ENCODE measurements at regions of chr7 and their contacts with region 1.

Region 1: GRCh38 chr7:48088559-48089045 is 463 bp upstream of the UPP1 start:
- DNase-seq: peak; percentile 70 to 83
- ATAC-seq: peak; percentile 81 to 86
- H3K4me3 ChIP-seq: peak overlapping the region; percentile 65 to 98 (median 86)
- H3K27ac ChIP-seq: peak overlapping the region; percentile 93 to 99 (median 96)
- H3K4me1 ChIP-seq: peaks cover 6 to 15% of the 10 kb centered on the region in 2 donors
- H3K27me3 ChIP-seq: no peaks in the 10 kb centered on the region
- CTCF ChIP-seq: no peak
- POLR2A ChIP-seq: peak in 1 of 2 donors; percentile 21

Region 2: DNA sequence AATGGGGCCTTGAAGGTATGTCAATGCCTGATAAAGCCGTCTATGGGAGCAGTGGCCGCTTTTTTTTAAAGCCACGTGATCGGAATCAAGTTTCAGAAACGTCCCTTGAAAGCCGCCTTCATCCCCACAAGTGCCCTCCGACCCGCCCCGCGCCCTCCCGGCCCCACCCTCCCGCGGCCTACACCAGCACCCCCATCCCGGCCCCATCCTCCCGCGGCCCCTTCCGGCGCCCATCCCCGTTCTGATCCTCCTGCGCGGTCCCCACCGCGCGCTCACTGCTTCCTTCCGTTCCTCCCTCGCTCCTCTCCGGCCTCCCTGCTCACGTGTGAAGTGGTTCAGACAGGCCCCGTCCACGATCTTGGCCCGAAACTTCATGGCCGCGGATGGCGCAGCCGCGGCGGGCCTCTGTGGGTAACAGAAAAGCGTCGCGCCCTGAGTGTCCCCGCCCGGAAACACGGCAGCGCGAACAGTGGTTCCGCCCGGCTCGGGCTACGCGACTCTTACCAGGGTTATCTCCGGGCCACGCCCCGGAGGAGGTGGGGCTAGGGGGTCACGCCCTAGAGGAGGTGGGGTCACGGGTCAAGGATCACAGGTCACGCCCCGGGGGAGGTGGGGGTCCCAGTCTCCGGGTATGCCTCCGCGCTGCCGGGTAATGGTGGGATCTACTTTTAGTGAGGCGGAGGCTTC is 109.3 kb before region 1 on chr7 and contains the start of gene HUS1:
- in situ Hi-C with region 1: loop called in 2 of 4 experiments (anchors 10 kb)
- intact Hi-C with region 1: loop called (anchors 1 kb)
- DNase-seq: peak; percentile 79 to 88
- ATAC-seq: peak; percentile 90 to 96
- H3K4me3 ChIP-seq: peak within 1 kb of the TSS; percentile 68 to 90 (median 74)
- H3K27ac ChIP-seq: peak within 1 kb of the TSS; percentile 78 to 82 (median 82)
- H3K4me1 ChIP-seq: peaks cover 8 to 9% of the 10 kb centered on the region in 2 donors
- H3K27me3 ChIP-seq: no peaks in the 10 kb centered on the region
- CTCF ChIP-seq: no peak
- POLR2A ChIP-seq: peak; percentile 60 to 61
- total RNA-seq, gene HUS1: 18.3 to 33.0 (median 23.0) TPM

Region 3: GRCh38 chr7:47991741-47992311 is 96.8 kb before region 1 on chr7:
- in situ Hi-C with region 1: loop called in 1 of 4 experiments (anchors 10 kb)
- intact Hi-C with region 1: no loop called
- DNase-seq: peak; percentile 58 to 64
- ATAC-seq: peak; percentile 63 to 75
- H3K4me3 ChIP-seq: peak overlapping the region; percentile 38 to 67 (median 48)
- H3K27ac ChIP-seq: peak overlapping the region in 1 of 4 donors; percentile 15
- H3K4me1 ChIP-seq: no peaks in the 10 kb centered on the region
- H3K27me3 ChIP-seq: peaks cover 0 to 2% (median 0%) of the 10 kb centered on the region in 3 donors
- CTCF ChIP-seq: peak; percentile 18 to 61 (median 49)
- POLR2A ChIP-seq: no peak

Region 4: DNA sequence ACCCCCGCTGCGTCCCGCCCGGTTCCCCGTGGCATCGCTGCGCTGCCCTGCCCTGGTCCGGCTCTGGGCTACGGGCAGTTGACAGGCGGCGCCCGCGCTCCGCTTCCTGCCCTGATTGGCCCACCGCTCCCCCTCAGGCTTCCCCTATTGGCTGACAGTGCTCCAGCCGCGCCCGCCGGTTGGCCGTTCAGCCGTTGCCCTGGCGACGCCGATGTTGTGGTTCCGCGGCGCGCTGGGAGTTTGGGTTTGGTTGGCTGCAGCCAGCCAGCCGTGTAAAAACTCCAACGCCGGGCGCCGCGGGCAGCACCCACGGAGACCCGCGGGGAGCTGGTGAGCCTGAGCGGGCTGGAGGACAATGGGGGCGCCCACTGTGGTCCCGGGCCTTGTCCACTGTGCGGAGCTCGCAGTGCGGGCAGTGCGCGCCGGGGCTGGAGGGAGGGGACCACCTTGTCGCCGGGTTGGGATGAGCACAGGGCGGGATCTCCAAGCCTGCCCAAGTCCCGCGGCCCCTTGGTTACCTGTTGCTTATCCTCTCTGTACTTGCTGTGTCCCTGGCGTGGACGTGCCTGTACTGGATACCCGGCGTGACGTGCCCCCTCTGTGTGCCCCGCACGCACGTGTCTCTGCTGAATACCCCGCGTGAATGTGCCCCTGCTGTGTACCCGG is 53.2 kb before region 1 on chr7 and contains the start of gene C7orf57:
- in situ Hi-C with region 1: no loop called
- intact Hi-C with region 1: loop called (anchors 1 kb)
- DNase-seq: peak; percentile 74 to 77
- ATAC-seq: peak; percentile 92 to 97
- H3K4me3 ChIP-seq: peak within 1 kb of the TSS; percentile 63 to 77 (median 64)
- H3K27ac ChIP-seq: no peak within 1 kb of the TSS
- H3K4me1 ChIP-seq: peaks cover 4 to 9% of the 10 kb centered on the region in 2 donors
- H3K27me3 ChIP-seq: peaks cover 0 to 8% (median 6%) of the 10 kb centered on the region in 3 donors
- CTCF ChIP-seq: peak in 2 of 5 experiments; percentile 20 to 30
- POLR2A ChIP-seq: no peak
- total RNA-seq, gene C7orf57: not detected

Region 5: DNA sequence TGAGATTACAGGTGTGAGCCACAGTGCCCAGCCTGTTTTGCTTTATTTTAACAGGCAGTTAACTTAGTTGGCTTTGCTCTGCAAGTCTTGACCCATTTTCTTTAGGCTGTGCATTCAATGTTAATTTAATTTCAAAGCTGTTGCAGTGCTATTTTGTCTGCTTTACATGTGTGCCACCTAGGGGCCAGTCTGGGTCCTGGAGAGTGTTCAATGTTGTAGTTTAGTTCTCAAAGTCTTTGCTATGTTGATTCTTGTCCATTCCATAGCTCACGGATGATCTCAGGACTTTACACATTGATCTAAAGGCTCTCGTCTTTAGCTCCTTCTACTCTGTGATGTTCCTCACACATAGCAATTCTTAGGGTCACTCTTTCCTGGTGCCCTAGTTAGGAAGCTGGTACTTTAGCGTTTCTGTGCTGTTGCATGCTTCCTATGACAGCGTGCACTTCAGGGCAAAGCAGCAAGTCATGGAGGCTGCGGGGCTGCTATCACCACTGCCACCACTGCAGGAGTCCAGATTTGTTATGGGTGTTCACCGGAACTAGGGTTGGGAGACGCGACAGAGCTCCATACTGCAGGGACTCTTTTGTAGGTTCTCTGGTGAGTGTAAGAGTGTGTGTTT is 66.3 kb after region 1 on chr7:
- in situ Hi-C with region 1: no loop called
- intact Hi-C with region 1: no loop called
- DNase-seq: no peak
- ATAC-seq: no peak
- H3K4me3 ChIP-seq: no peak overlapping the region
- H3K27ac ChIP-seq: no peak overlapping the region
- H3K4me1 ChIP-seq: no peaks in the 10 kb centered on the region
- H3K27me3 ChIP-seq: no peaks in the 10 kb centered on the region
- CTCF ChIP-seq: no peak
- POLR2A ChIP-seq: no peak